CD4-positive, alpha-beta memory T cell (primary cell): ENCODE measurements at regions of chr15 and their contacts with region 1.

Region 1: DNA sequence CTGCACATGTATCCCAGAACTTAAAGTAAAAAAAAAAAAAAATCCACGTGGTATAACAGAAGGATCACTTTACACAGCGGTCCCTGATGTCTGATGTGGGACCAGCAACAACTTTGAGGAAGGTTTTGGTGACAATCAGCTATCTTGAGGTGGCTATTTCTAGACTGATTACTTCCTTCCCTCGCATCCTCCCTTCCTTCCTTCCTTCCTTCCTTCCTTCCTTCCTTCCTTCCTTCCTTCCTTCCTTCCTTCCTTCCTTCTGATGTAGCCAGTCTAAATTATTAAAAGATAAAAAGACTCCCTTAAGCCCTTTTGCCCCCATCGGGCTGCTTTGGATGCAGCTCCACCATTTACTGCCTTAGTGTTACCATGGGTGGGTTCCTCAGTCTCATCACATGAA is 14.9 kb downstream of the SORD start:
- DNase-seq: no peak
- H3K4me3 ChIP-seq: no peak overlapping the region
- H3K4me3 Mint-ChIP-seq: peak overlapping the region in 1 of 8 donors; percentile 26
- H3K27ac ChIP-seq: no peak overlapping the region
- H3K27ac Mint-ChIP-seq: peak overlapping the region in 1 of 7 donors; percentile 4
- H3K4me1 ChIP-seq: peaks cover 5% of the 10 kb centered on the region
- H3K4me1 Mint-ChIP-seq: peaks cover 5 to 19% (median 11%) of the 10 kb centered on the region in 4 donors
- H3K27me3 ChIP-seq: no peaks in the 10 kb centered on the region
- H3K27me3 Mint-ChIP-seq: no peaks in the 10 kb centered on the region

Region 2: DNA sequence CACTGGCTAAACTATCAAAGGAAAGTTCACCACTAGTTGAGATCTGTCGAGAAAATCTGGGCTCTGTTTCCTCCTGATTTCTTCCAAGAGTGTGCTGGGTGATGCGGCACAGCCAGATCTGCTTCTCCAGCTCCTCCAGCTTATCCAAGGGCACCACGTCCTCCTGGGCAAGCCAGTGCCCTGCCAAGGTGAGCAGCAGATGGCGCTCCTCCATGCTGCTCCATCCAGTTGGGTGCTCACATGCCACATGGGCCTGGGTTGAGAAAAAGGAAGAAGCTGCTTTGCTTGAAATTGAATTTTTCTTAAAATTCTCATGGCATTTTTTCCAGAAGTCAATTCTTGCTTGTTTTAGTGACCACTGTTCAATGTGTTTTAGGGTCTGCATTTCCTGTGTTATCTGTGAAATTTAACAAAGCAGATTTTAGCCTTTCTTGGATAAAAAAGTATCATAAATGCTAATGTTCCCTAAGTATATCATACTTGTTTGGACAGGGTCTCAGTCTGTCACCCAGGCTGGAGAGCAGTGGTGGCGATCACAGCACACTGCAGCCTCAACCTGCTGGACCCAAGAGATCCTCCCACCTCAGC is 453.7 kb before region 1 on chr15:
- CTCF ChIA-PET with region 1: interaction called, 14 read pairs
- POLR2A ChIA-PET with region 1: no interaction called
- intact Hi-C with region 1: loop called (anchors 2 kb)
- DNase-seq: peak; percentile 46 to 53 (median 52)
- H3K4me3 ChIP-seq: no peak overlapping the region
- H3K4me3 Mint-ChIP-seq: no peak overlapping the region
- H3K27ac ChIP-seq: no peak overlapping the region
- H3K27ac Mint-ChIP-seq: peak overlapping the region in 6 of 7 donors; percentile 12 to 86 (median 62)
- H3K4me1 ChIP-seq: peaks cover 2% of the 10 kb centered on the region
- H3K4me1 Mint-ChIP-seq: peaks cover 5 to 19% (median 12%) of the 10 kb centered on the region in 4 donors
- H3K27me3 ChIP-seq: no peaks in the 10 kb centered on the region
- H3K27me3 Mint-ChIP-seq: no peaks in the 10 kb centered on the region

Region 3: GRCh38 chr15:44968475-44968874 is 69.5 kb before region 1 on chr15:
- CTCF ChIA-PET with region 1: interaction called, 7 read pairs
- POLR2A ChIA-PET with region 1: no interaction called
- intact Hi-C with region 1: loop called (anchors 2 kb)
- DNase-seq: no peak
- H3K4me3 ChIP-seq: no peak overlapping the region
- H3K4me3 Mint-ChIP-seq: no peak overlapping the region
- H3K27ac ChIP-seq: no peak overlapping the region
- H3K27ac Mint-ChIP-seq: no peak overlapping the region
- H3K4me1 ChIP-seq: no peaks in the 10 kb centered on the region
- H3K4me1 Mint-ChIP-seq: no peaks in the 10 kb centered on the region
- H3K27me3 ChIP-seq: no peaks in the 10 kb centered on the region
- H3K27me3 Mint-ChIP-seq: peaks cover 1 to 8% of the 10 kb centered on the region in 2 donors

Region 4: DNA sequence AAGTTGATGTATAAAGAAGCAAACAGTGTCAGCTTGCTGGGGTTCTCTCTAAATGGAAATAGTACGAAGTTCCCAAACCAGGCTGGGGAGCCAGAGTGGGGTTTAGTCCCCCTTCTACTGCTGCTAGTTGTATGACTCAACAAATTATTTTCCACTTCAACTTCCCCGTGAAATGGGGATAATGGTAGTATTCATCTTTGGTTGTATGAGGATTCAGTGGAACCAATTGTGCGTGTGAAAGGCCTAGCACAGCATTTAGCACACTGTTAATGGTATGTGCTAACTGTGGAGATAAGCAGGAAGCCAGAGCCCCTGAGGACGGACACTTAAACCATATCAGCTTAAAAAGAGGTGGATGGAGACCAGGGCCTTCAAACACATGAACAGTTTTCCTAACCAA is 10.7 kb before region 1 on chr15:
- CTCF ChIA-PET with region 1: interaction called, 14 read pairs
- POLR2A ChIA-PET with region 1: no interaction called
- intact Hi-C with region 1: no loop called
- DNase-seq: no peak
- H3K4me3 ChIP-seq: no peak overlapping the region
- H3K4me3 Mint-ChIP-seq: no peak overlapping the region
- H3K27ac ChIP-seq: no peak overlapping the region
- H3K27ac Mint-ChIP-seq: no peak overlapping the region
- H3K4me1 ChIP-seq: peaks cover 14% of the 10 kb centered on the region
- H3K4me1 Mint-ChIP-seq: peaks cover 9 to 28% (median 11%) of the 10 kb centered on the region in 4 donors
- H3K27me3 ChIP-seq: no peaks in the 10 kb centered on the region
- H3K27me3 Mint-ChIP-seq: no peaks in the 10 kb centered on the region